IMR-90 (cell line): ENCODE measurements at regions of chr2 and their contacts with region 1.

Region 1: GRCh38 chr2:69888451-69888850 is 5.3 kb upstream of the SNRNP27 start:
- DNase-seq: no peak
- ATAC-seq: no peak
- H3K4me3 ChIP-seq: no peak overlapping the region
- H3K27ac ChIP-seq: no peak overlapping the region
- H3K4me1 ChIP-seq: no peaks in the 10 kb centered on the region
- H3K27me3 ChIP-seq: no peaks in the 10 kb centered on the region
- CTCF ChIP-seq: no peak
- POLR2A ChIP-seq: no peak
- RAD21 ChIP-seq: no peak

Region 2: DNA sequence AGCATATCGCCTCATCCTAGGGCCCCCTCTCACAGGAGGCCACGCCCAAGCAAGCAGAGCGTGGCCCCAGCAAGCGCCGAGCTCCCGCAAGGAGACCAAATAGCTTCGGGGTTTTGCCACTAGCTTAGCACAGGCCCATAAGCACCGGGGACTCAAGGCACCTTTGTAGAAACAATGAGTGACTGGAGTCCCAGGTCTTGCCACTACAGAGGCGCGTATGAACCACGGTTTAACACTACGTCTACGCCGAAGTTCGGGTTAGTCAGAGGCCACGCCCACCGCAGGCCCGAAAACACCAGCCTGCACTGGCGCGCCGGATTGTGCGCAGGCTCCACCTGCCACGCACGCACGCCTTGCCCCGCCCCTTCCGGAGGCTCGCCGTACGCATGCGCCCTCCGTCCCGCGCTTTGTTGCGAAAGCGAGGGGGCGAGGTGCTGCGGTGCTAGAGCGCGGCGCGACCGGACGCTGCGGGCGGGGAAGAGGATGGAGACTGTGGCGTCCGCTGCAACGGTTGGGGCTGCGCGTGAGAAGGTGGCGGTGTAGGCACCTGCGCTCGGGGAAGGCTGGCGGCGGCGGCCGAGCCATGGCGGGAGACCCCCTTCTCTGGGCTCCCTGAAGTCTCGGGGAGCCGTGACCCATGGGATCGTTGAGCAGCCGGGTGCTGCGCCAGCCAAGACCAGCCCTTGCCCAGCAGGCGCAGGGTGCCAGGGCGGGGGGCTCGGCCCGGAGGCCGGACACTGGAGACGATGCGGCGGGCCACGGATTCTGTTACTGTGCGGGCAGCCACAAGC is 59.0 kb before region 1 on chr2 and contains the start of gene GMCL1:
- CTCF ChIA-PET with region 1: no interaction called
- POLR2A ChIA-PET with region 1: no interaction called
- dilution Hi-C with region 1: no loop called
- in situ Hi-C with region 1: no loop called
- intact Hi-C with region 1: loop called (anchors 10 kb)
- DNase-seq: peak; percentile 94
- ATAC-seq: peak; percentile 95
- H3K4me3 ChIP-seq: peak within 1 kb of the TSS; percentile 58
- H3K27ac ChIP-seq: peak within 1 kb of the TSS; percentile 80
- H3K4me1 ChIP-seq: 0 out of 2 replicates have a peak, but pooled peaks cover 2% of the 10 kb centered on the region
- H3K27me3 ChIP-seq: no peaks in the 10 kb centered on the region
- CTCF ChIP-seq: no peak
- POLR2A ChIP-seq: peak; percentile 86
- RAD21 ChIP-seq: no peak
- total RNA-seq, gene GMCL1: 3.4 and 6.1 TPM in 2 replicates

Region 3: DNA sequence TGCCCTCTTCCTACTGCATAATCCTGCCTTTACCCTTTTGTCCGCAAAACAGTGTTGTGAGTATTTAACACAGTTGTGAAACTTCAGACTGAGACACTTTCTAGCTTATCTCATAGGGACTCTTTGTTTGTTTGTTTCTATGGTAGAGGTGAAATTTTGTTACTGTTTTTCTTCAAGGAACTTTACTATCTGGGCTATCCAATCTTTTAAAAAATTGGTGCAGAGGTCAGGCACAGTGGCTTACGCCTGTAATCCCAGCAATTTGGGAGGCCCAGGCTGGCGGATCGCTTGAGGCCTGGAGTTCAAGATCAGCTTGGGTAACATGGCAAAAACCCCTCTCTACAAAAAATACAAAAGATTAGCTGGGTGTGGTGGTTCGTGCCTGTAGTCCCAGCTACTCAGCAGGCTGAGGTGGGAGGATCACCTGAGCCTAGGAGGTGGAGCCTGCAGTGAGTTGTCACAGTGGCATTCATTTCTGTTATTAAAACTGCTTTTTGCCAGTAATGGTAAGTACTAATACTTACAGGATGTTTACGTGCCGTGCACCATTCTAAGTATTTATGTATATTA is 40.2 kb before region 1 on chr2:
- CTCF ChIA-PET with region 1: no interaction called
- POLR2A ChIA-PET with region 1: no interaction called
- dilution Hi-C with region 1: no loop called
- in situ Hi-C with region 1: no loop called
- intact Hi-C with region 1: loop called (anchors 5 kb)
- DNase-seq: no peak
- ATAC-seq: no peak
- H3K4me3 ChIP-seq: no peak overlapping the region
- H3K27ac ChIP-seq: no peak overlapping the region
- H3K4me1 ChIP-seq: no peaks in the 10 kb centered on the region
- H3K27me3 ChIP-seq: no peaks in the 10 kb centered on the region
- CTCF ChIP-seq: no peak
- POLR2A ChIP-seq: no peak
- RAD21 ChIP-seq: no peak